SK-N-SH (cell line): ENCODE measurements at regions of chr17 and their contacts with region 1.

Region 1: GRCh38 chr17:49997791-49998703 is 3.0 kb upstream of the DLX3 start:
- DNase-seq: peak; percentile 92
- H3K4me3 ChIP-seq: peak overlapping the region in 1 of 2 experiments; percentile 3; a peak in 2 of 4 replicates
- H3K27ac ChIP-seq: no peak overlapping the region
- H3K4me1 ChIP-seq: peaks cover 6 to 12% of the 10 kb centered on the region in 2 experiments; a peak in 1 of 4 replicates
- H3K27me3 ChIP-seq: peaks cover 76% of the 10 kb centered on the region
- CTCF ChIP-seq: peak; percentile 99
- EP300 ChIP-seq: no peak
- RAD21 ChIP-seq: peak; percentile 99

Region 2: GRCh38 chr17:48970224-48970623 is 1027.8 kb before region 1 on chr17:
- CTCF ChIA-PET with region 1: no interaction called
- POLR2A ChIA-PET with region 1: no interaction called
- DNase-seq: peak; percentile 34
- H3K4me3 ChIP-seq: no peak overlapping the region
- H3K27ac ChIP-seq: no peak overlapping the region
- H3K4me1 ChIP-seq: peaks cover 0 to 22% of the 10 kb centered on the region in 2 experiments; a peak in 3 of 4 replicates
- H3K27me3 ChIP-seq: no peaks in the 10 kb centered on the region
- CTCF ChIP-seq: no peak
- EP300 ChIP-seq: no peak
- RAD21 ChIP-seq: no peak

Region 3: GRCh38 chr17:49694847-49695683 is 303.0 kb before region 1 on chr17:
- CTCF ChIA-PET with region 1: interaction called, 25 read pairs
- POLR2A ChIA-PET with region 1: no interaction called
- DNase-seq: peak; percentile 82
- H3K4me3 ChIP-seq: no peak overlapping the region; a peak in 1 of 4 replicates
- H3K27ac ChIP-seq: no peak overlapping the region
- H3K4me1 ChIP-seq: peaks cover 0 to 2% of the 10 kb centered on the region in 2 experiments; a peak in 1 of 4 replicates
- H3K27me3 ChIP-seq: no peaks in the 10 kb centered on the region
- CTCF ChIP-seq: peak; percentile 100
- EP300 ChIP-seq: no peak
- RAD21 ChIP-seq: peak; percentile 98

Region 4: GRCh38 chr17:49840066-49840465 is 158.0 kb before region 1 on chr17:
- CTCF ChIA-PET with region 1: interaction called, 1,665 read pairs
- POLR2A ChIA-PET with region 1: no interaction called
- DNase-seq: no peak
- H3K4me3 ChIP-seq: no peak overlapping the region
- H3K27ac ChIP-seq: no peak overlapping the region
- H3K4me1 ChIP-seq: peaks cover 1 to 7% of the 10 kb centered on the region in 2 experiments; a peak in 1 of 4 replicates
- H3K27me3 ChIP-seq: no peaks in the 10 kb centered on the region
- CTCF ChIP-seq: no peak
- EP300 ChIP-seq: no peak
- RAD21 ChIP-seq: no peak

Region 5: DNA sequence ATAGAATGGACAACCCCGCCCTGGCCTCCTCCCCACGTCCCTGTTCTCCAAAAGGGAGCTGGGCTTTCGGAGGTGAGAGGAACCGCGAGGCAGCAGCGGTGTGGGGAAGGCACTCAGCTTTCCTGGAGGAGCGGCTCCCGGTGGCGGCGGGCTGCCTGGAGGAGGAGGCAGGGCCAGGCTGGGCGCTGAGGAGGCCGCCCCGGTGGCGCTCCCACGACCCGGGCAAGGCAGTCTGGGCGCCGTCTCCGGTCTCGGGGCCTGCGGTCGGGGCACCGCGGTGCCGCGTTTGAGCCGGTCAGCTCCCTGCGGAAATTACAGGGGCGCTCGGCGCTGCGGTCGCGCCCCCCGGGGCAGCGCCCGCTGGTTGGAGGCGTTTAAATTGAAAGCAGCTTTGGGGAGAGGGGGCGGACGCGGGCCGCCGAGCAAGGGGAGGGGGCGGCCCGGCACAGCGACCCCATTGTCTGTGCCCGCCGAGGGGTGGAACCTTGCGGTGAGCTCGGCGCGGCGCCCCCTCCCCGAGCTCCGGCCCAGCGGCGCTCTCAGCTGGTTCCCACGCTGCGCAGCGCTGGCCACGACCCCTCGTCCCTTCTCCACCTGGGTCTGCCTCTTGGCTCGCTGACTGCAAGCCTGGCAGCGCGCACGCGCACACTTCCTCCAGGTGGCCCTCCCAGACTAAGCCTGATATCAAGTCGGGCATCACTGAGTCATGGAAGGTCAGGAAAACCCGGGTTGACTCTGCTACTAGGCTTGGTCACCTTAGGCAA is 87.8 kb before region 1 on chr17:
- CTCF ChIA-PET with region 1: interaction called, 170 read pairs
- POLR2A ChIA-PET with region 1: no interaction called
- DNase-seq: peak; percentile 73
- H3K4me3 ChIP-seq: peak overlapping the region in 1 of 2 experiments; percentile 15; a peak in 1 of 4 replicates
- H3K27ac ChIP-seq: no peak overlapping the region
- H3K4me1 ChIP-seq: peaks cover 0 to 3% of the 10 kb centered on the region in 2 experiments; a peak in 1 of 4 replicates
- H3K27me3 ChIP-seq: peaks cover 93% of the 10 kb centered on the region
- CTCF ChIP-seq: no peak
- EP300 ChIP-seq: no peak
- RAD21 ChIP-seq: no peak

Region 6: DNA sequence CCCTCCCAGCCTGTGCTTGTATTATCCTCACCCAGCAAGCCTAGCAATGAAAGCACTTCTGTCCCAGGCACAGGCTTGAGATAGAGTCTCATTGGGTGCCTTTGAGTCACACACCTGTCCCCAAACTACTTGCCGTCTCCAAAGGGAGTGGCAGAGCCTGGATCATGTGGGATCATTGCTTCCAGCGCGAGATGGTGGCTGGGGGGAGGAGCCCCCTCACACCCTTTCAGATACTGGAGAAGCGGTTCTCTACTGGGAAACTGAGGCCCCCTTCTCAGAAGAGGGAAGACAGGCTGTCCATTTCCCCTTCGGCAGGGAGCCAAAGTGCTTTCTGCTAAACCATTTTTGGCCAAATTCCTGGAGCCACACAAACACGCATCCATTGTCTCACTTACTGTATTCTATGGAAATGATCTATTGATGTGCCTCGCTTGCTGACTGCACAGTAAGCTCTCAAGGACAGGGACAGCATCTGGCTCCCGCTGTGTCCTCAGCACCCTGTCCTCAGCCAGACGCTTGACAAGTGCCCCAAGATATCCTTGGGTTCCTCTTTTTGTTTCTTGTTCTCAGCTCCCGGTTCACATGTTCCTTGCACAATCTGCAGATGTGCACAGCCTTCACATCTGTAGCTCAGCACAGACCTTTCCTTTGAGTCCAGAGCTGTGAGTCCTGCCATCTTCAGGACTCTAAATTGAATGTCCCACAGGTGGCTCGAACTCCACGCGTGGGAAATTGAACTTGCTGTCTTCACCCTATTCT is 23.0 kb after region 1 on chr17:
- CTCF ChIA-PET with region 1: interaction called, 39 read pairs
- POLR2A ChIA-PET with region 1: no interaction called
- DNase-seq: no peak
- H3K4me3 ChIP-seq: no peak overlapping the region
- H3K27ac ChIP-seq: no peak overlapping the region
- H3K4me1 ChIP-seq: peaks cover 0 to 2% of the 10 kb centered on the region in 2 experiments; a peak in 1 of 4 replicates
- H3K27me3 ChIP-seq: no peaks in the 10 kb centered on the region
- CTCF ChIP-seq: no peak
- EP300 ChIP-seq: no peak
- RAD21 ChIP-seq: no peak

Region 7: GRCh38 chr17:50087246-50087911 is 89.3 kb after region 1 on chr17:
- CTCF ChIA-PET with region 1: interaction called, 66 read pairs
- POLR2A ChIA-PET with region 1: no interaction called
- DNase-seq: peak; percentile 97
- H3K4me3 ChIP-seq: no peak overlapping the region; a peak in 1 of 4 replicates
- H3K27ac ChIP-seq: peak overlapping the region in 1 of 2 experiments; percentile 32; a peak in 1 of 4 replicates
- H3K4me1 ChIP-seq: no peaks in the 10 kb centered on the region
- H3K27me3 ChIP-seq: no peaks in the 10 kb centered on the region
- CTCF ChIP-seq: peak; percentile 99
- EP300 ChIP-seq: no peak
- RAD21 ChIP-seq: peak; percentile 98